ENCODE measurements at regions of chr17 and their contacts with region 1.

Region 1: DNA sequence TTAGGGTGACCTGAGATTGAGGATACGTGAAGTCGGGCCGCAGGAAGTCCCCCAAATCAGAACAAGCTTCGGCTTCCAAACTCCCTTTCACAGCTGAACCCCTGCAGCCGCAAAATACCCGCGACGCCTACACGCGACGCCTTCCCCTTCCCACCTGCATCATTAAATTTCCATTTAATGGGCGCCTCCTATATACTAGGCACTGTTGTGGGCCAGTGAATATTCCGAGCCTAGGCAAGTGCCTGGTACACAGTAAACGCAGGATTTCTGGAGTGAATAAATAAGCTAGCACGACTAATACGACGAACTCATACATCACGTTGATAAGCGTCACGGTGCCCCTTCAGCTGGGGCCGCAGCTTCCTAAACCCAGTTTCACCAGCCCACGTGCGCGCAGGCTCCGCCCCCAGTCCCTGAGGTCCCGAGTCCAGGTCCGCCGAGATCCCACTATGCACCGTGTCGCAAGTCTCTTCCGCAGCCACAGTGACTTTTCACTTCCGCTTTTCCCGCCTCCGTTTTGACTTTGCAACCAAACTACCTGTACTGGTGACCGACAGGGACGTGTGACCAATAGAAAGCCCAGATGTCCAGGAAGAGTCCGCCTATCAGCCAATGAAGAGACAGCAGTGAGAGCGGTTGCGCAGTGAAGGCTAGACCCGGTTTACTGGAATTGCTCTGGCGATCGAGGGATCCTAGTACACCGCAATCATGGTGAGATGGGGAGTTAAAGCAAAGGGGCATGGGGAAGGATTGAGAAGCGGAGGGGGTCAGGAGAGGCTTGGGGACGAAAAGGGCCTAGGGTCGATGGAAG is at the start of gene PSMB3:
- DNase-seq: peak; percentile 98 to 99
- ATAC-seq: peak; percentile 97 to 98
- H3K4me3 ChIP-seq: peak within 1 kb of the TSS; percentile 75 to 97 (median 90)
- H3K27ac ChIP-seq: peak within 1 kb of the TSS; percentile 92 to 96 (median 94)
- H3K4me1 ChIP-seq: peaks cover 27 to 41% of the 10 kb centered on the region in 2 donors
- H3K27me3 ChIP-seq: peaks cover 24 to 33% (median 29%) of the 10 kb centered on the region in 3 donors
- CTCF ChIP-seq: no peak
- POLR2A ChIP-seq: peak; percentile 53 to 85
- total RNA-seq, gene PSMB3: 211 to 334 (median 280) TPM

Region 2: DNA sequence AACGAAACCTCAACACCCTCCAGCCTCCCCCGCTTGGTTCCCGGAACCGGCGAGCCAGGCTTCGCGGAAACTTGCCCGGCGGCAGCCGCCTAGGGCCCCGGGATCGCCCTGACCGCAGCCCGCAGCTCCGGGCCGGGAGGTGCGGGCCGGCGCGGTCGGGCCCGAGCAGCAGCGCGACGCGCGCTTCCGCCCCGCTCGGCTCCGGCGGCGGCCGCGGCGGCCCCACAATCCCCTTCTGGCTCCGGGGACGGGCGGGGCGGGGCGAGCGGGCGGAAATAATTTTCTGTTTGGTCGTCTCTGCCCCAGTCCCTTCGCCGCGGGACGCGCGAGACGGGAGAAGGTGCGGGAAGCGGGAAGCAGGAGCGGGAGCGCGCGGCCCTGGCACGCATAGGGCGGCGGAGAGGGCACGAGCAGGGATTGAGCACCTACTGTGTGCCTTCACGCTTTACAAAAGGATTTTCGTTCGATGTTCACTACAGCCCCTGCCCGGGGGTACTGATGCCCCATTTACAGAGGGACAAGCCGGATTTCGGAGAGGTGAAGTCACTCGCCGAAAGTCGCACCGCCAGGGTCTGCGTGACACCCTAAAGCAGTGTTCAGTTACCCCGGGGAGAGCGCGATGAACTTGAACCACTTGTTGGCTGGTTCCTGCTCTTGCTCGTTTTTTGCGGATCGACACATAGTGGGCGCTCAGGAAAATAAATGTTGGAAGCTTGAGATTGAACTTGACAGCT is 50.0 kb before region 1 on chr17:
- in situ Hi-C with region 1: no loop called
- intact Hi-C with region 1: loop called (anchors 1 kb)
- DNase-seq: peak; percentile 82 to 88
- ATAC-seq: peak; percentile 47 to 50
- H3K4me3 ChIP-seq: peak overlapping the region; percentile 71 to 93 (median 78)
- H3K27ac ChIP-seq: peak overlapping the region; percentile 96 to 100 (median 98)
- H3K4me1 ChIP-seq: peaks cover 20 to 25% of the 10 kb centered on the region in 2 donors
- H3K27me3 ChIP-seq: no peaks in the 10 kb centered on the region
- CTCF ChIP-seq: no peak
- POLR2A ChIP-seq: peak; percentile 96 to 97

Region 3: GRCh38 chr17:38729886-38730525 is 22.3 kb before region 1 on chr17 and contains the start of gene CISD3:
- in situ Hi-C with region 1: no loop called
- intact Hi-C with region 1: loop called (anchors 1 kb)
- DNase-seq: peak; percentile 70 to 79
- ATAC-seq: peak; percentile 81 to 86
- H3K4me3 ChIP-seq: peak within 1 kb of the TSS; percentile 79 to 96 (median 87)
- H3K27ac ChIP-seq: peak within 1 kb of the TSS; percentile 88 to 95 (median 90)
- H3K4me1 ChIP-seq: peaks cover 20 to 22% of the 10 kb centered on the region in 2 donors
- H3K27me3 ChIP-seq: no peaks in the 10 kb centered on the region
- CTCF ChIP-seq: peak in 4 of 5 experiments; percentile 91 to 98 (median 96)
- POLR2A ChIP-seq: peak; percentile 55 to 68
- total RNA-seq, gene CISD3: 10.0 to 25.8 (median 13.3) TPM

Region 4: GRCh38 chr17:38799378-38800236 is 47.3 kb after region 1 on chr17 and contains the start of gene PIP4K2B:
- in situ Hi-C with region 1: loop called in 1 of 4 experiments (anchors 10 kb)
- intact Hi-C with region 1: loop called (anchors 1 kb)
- DNase-seq: peak; percentile 92 to 97
- ATAC-seq: peak; percentile 91 to 92
- H3K4me3 ChIP-seq: peak within 1 kb of the TSS; percentile 83 to 96 (median 88)
- H3K27ac ChIP-seq: peak within 1 kb of the TSS; percentile 94 to 100 (median 100)
- H3K4me1 ChIP-seq: peaks cover 34 to 37% of the 10 kb centered on the region in 2 donors
- H3K27me3 ChIP-seq: no peaks in the 10 kb centered on the region
- CTCF ChIP-seq: no peak
- POLR2A ChIP-seq: peak; percentile 47 to 51
- total RNA-seq, gene PIP4K2B: 57.2 to 97.0 (median 76.8) TPM

Region 5: DNA sequence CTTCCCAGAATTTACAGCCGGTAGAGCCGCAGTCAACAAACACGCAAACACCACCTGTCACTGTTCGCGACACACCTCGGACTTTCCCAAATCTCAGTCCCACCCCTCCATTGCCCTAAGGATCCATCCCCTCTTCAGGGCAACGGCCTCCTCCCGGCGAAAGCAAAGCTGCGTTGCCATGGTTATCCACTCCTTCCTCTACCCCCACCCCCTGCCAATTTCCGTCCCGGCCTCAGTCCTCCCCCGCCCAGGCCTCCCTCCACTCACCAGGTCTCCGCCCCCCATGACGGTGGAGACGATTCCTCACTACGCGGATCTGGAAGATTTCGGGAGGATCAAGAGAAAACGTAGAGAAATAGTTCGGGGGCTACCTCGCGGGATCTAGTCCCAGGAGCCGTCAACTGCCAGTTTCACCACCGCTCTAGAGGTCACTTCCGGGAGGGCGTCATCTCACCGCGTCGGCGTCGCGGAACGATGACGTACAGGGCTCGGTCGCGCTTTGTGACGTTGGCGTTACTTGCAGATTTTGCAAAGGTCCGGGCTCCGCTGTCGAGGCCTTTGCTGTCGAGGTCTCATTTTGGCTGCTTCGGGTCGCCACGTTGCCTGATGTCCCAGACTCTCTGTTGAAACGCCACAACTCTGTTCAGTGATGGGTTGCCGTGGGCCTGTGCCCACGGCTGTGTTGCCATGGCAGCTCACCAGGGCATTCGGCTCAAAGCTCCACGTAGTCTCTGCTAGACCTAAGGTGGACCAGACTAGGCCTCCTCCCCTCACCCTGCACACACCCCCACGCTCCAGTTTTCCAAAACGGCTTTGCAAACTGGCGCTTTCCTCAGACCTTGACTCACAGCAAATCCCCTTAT is 72.8 kb after region 1 on chr17 and contains the start of gene CWC25:
- in situ Hi-C with region 1: no loop called
- intact Hi-C with region 1: loop called (anchors 2 kb)
- DNase-seq: peak; percentile 79 to 96
- ATAC-seq: peak; percentile 96 to 97
- H3K4me3 ChIP-seq: peak within 1 kb of the TSS; percentile 69 to 100 (median 90)
- H3K27ac ChIP-seq: peak within 1 kb of the TSS; percentile 96 to 99 (median 98)
- H3K4me1 ChIP-seq: peaks cover 18 to 21% of the 10 kb centered on the region in 2 donors
- H3K27me3 ChIP-seq: no peaks in the 10 kb centered on the region
- CTCF ChIP-seq: no peak
- POLR2A ChIP-seq: peak; percentile 71 to 85
- total RNA-seq, gene CWC25: 9.1 to 14.4 (median 12.3) TPM

Region 6: DNA sequence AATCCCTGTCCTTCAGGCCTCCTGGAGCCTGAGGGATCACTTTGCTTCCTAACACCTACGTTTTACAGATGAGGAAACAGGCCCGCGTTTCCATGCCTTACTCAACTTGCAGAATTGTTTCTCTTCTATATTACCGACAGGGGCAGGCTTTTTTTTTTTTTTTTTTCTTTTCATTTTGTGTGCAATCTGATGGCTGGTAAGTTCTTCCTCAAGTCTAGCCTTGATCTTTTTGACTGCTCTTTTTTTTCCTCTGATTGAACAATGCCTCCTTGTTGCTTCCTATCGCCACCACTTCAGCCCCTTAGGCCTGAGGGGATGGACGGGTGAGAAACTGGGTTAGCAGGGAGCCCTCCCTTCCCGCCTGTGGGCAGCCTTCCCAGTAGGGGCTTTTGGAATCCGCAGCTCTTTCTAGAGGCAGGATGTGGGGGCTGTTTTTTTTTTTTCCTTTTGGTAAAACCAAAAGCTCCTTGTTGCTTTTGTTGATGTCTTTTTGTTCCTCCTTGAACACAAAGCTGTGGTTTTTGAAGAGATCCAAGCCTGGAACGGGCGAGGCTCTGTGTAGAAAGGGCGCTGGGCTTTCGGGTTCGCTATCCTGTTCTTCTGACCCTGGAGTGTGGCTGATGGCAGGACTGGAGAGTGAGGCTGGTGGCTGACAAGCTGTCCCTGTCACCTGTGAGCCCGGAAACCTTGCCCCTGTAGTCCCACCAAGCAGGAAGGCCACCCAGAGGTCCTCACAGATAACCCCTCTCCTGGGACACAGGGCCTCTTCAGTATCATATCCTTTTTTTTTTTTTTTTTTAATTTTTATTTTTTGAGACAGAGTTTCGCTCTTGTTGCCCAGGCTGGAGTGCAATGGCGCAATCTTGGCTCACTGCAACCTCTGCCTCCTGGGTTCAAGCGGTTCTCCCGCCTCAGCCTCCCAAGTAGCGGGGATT is 131.5 kb after region 1 on chr17:
- in situ Hi-C with region 1: no loop called
- intact Hi-C with region 1: no loop called
- DNase-seq: no peak
- ATAC-seq: no peak
- H3K4me3 ChIP-seq: no peak overlapping the region
- H3K27ac ChIP-seq: peak overlapping the region; percentile 30 to 71 (median 58)
- H3K4me1 ChIP-seq: peaks cover 53 to 56% of the 10 kb centered on the region in 2 donors
- H3K27me3 ChIP-seq: no peaks in the 10 kb centered on the region
- CTCF ChIP-seq: no peak
- POLR2A ChIP-seq: no peak

Region 7: GRCh38 chr17:39057701-39058206 is 305.4 kb after region 1 on chr17:
- in situ Hi-C with region 1: no loop called
- intact Hi-C with region 1: no loop called
- DNase-seq: no peak
- ATAC-seq: peak in 1 of 2 donors; percentile 40
- H3K4me3 ChIP-seq: peak overlapping the region in 2 of 4 donors; percentile 58 to 82
- H3K27ac ChIP-seq: peak overlapping the region in 3 of 4 donors; percentile 2 to 61 (median 44)
- H3K4me1 ChIP-seq: peaks cover 0 to 3% of the 10 kb centered on the region in 2 donors
- H3K27me3 ChIP-seq: no peaks in the 10 kb centered on the region
- CTCF ChIP-seq: no peak
- POLR2A ChIP-seq: no peak